ENCODE measurements at regions of chr15 and their contacts with region 1.

Region 1: GRCh38 chr15:69058830-69059556 is 44.5 kb downstream of the NOX5 start:
- DNase-seq: peak; percentile 83 to 89
- H3K4me3 ChIP-seq: no peak overlapping the region
- H3K27ac ChIP-seq: no peak overlapping the region
- H3K4me1 ChIP-seq: no peaks in the 10 kb centered on the region
- H3K27me3 ChIP-seq: no peaks in the 10 kb centered on the region
- CTCF ChIP-seq: peak; percentile 38 to 86 (median 80)
- POLR2A ChIP-seq: no peak

Region 2: GRCh38 chr15:69000725-69001503 is 58.1 kb before region 1 on chr15:
- intact Hi-C with region 1: no loop called
- DNase-seq: no peak
- H3K4me3 ChIP-seq: no peak overlapping the region
- H3K27ac ChIP-seq: no peak overlapping the region
- H3K4me1 ChIP-seq: peaks cover 0 to 6% of the 10 kb centered on the region in 2 donors
- H3K27me3 ChIP-seq: no peaks in the 10 kb centered on the region
- CTCF ChIP-seq: no peak
- POLR2A ChIP-seq: no peak

Region 3: DNA sequence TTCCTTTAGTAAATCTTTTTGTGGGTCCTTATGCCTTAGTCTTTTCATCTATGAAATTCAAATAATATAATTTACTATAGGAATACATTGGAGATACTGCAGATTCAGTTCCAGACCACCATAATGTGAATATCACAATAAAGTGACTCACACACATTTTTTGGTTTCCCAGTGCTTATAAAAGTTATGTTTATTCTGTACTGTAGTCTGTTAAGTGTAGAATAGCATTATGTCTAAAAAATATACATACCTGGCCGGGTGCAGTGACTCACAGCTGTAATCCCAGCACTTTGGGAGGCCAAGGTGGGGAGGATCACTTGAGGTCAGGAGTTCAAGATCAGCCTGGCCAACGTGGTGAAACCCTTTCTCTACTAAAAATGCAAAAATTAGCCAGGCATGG is 185.8 kb after region 1 on chr15:
- intact Hi-C with region 1: no loop called
- DNase-seq: no peak
- H3K4me3 ChIP-seq: no peak overlapping the region
- H3K27ac ChIP-seq: no peak overlapping the region
- H3K4me1 ChIP-seq: no peaks in the 10 kb centered on the region
- H3K27me3 ChIP-seq: no peaks in the 10 kb centered on the region
- CTCF ChIP-seq: no peak
- POLR2A ChIP-seq: no peak

Region 4: GRCh38 chr15:69265347-69265955 is 206.5 kb after region 1 on chr15:
- intact Hi-C with region 1: loop called (anchors 5 kb)
- DNase-seq: no peak
- H3K4me3 ChIP-seq: no peak overlapping the region
- H3K27ac ChIP-seq: no peak overlapping the region
- H3K4me1 ChIP-seq: no peaks in the 10 kb centered on the region
- H3K27me3 ChIP-seq: no peaks in the 10 kb centered on the region
- CTCF ChIP-seq: peak; percentile 24 to 66 (median 49)
- POLR2A ChIP-seq: no peak

Region 5: GRCh38 chr15:69393831-69394491 is 335.0 kb after region 1 on chr15:
- intact Hi-C with region 1: loop called (anchors 2 kb)
- DNase-seq: peak; percentile 52 to 66
- H3K4me3 ChIP-seq: no peak overlapping the region
- H3K27ac ChIP-seq: peak overlapping the region in 2 of 3 donors; percentile 39 to 47
- H3K4me1 ChIP-seq: peaks cover 24 to 28% of the 10 kb centered on the region in 2 donors
- H3K27me3 ChIP-seq: no peaks in the 10 kb centered on the region
- CTCF ChIP-seq: no peak
- POLR2A ChIP-seq: no peak

Measured in thyroid gland (tissue), 4 donors.